Stomach (tissue), 19 donors: ENCODE measurements at regions of chr2 and their contacts with region 1.

Region 1: DNA sequence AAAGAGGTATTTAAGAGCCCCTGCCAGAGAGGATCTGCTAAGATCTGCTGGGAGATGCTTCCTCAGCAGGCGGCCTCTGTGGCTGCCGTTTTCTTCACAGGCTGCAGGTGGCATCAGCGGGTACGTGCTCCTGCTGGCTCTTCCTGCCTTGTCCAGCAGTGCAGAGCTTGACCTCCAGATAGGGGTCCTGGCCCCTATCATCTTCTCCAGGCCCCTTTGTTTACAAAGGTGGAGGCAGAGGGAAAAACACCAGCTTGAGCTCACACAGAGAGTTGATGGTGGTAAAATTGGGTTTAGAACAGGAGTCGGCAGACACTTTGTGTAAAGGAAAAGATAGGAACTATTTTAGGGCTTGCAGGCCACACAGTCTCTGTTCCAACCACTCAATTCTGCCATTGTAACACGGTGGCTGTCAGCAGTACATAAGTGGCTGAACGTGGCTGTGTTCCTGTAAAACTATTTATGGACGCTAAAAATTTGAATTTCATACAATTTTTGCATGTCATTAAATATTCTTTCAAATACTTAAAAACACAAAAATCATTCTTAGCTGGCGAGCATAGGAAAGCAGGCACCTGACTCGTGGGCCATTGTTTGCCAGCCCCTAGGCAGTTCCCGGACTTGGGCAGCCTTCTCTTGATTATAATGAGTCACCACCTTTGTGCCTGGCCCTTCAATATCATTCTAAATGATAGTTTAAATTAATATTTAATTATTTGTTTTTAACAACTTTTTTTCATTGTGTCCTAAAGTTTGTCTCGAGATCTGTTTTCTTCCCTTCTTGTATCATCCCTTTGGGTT is 98.2 kb upstream of the B3GNT7 start:
- DNase-seq: peak; percentile 69 to 81
- H3K4me3 ChIP-seq: no peak overlapping the region
- H3K27ac ChIP-seq: peak overlapping the region; percentile 3 to 75 (median 48)
- H3K4me1 ChIP-seq: peaks cover 11 to 45% (median 18%) of the 10 kb centered on the region in 4 donors
- H3K27me3 ChIP-seq: no peaks in the 10 kb centered on the region
- CTCF ChIP-seq: peak in 5 of 7 experiments; percentile 63 to 67 (median 66)
- EP300 ChIP-seq: no peak
- POLR2A ChIP-seq: no peak

Region 2: DNA sequence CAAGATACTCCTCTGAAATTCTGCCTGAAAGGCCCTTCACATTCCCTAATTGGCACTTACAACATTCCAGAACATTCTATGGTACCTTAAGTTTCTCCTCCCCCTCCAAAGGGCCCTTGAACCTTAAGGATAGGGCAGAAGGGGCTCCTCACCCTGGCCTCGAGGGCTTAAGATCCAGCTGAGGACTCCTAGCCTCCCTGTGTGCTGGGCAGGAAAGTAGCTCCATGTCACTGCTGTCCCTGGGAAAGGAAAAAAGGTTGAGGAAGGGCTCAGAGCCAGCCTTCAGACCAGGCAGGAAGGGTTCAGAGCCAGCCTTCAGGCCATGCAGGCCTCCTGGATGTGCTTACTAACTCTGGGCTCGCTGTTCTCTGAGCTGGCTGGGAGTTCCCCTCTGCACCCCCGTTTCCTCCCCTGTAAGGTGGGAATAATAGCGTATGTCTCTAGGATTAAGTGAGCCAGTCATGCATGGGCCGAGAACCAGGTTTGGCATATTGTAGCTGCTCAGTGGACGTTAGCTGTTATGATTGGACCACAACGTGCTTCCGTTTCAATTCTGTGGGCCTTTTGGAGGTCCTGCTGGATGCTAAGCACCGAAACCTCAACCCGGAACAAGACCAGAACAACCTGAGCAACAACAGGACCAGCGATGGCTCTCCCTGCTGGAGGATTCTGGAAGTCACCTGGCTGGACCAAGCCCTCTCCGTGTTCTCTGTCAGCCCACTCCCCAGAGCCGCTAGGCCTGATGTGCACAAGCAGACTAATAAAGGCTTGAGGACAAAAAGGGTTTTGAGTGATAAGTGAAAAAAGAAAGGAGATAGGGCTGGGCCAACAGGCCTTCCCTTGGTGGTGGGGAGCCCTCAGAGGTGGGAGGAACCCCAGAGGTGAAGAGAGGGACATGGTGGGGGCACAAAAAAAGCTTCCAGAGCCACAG is 97.2 kb after region 1 on chr2:
- intact Hi-C with region 1: loop called (anchors 5 kb)
- DNase-seq: peak in 1 of 2 donors; percentile 67
- H3K4me3 ChIP-seq: peak overlapping the region in 3 of 4 donors; percentile 59 to 73 (median 69)
- H3K27ac ChIP-seq: peak overlapping the region; percentile 50 to 90 (median 77)
- H3K4me1 ChIP-seq: peaks cover 17 to 43% (median 30%) of the 10 kb centered on the region in 4 donors
- H3K27me3 ChIP-seq: peaks cover 0 to 42% (median 19%) of the 10 kb centered on the region in 3 donors
- CTCF ChIP-seq: peak in 3 of 7 experiments; percentile 8 to 28 (median 27)
- EP300 ChIP-seq: no peak
- POLR2A ChIP-seq: no peak

Region 3: GRCh38 chr2:231411831-231412617 is 114.7 kb after region 1 on chr2:
- intact Hi-C with region 1: loop called (anchors 5 kb)
- DNase-seq: peak; percentile 87 to 94
- H3K4me3 ChIP-seq: peak overlapping the region; percentile 57 to 73 (median 60)
- H3K27ac ChIP-seq: peak overlapping the region; percentile 56 to 89 (median 67)
- H3K4me1 ChIP-seq: peaks cover 0 to 28% (median 16%) of the 10 kb centered on the region in 4 donors
- H3K27me3 ChIP-seq: peaks cover 0 to 9% (median 5%) of the 10 kb centered on the region in 3 donors
- CTCF ChIP-seq: peak in 5 of 7 experiments; percentile 71 to 88 (median 78)
- EP300 ChIP-seq: no peak
- POLR2A ChIP-seq: no peak

Region 4: DNA sequence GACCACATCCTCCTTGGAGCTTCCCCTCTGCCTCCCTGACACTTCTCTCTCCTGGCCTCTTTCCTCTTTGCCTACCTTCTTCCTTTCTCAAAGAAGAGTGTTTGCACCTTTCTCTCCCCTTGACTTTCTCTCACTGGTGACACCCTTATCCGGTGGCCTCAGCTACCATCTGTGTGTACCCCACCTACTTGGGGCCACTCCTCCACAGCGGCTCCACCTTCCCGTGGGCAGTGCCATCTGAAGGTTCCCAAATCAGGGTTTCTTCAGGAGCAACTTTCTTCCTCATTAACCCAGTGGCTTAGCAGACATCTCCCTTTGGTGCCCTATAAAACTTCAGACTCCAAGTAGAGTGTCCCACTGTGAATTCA is 172.3 kb after region 1 on chr2:
- intact Hi-C with region 1: no loop called
- DNase-seq: no peak
- H3K4me3 ChIP-seq: no peak overlapping the region
- H3K27ac ChIP-seq: no peak overlapping the region
- H3K4me1 ChIP-seq: peaks cover 6 to 10% (median 8%) of the 10 kb centered on the region in 4 donors
- H3K27me3 ChIP-seq: no peaks in the 10 kb centered on the region
- CTCF ChIP-seq: no peak
- EP300 ChIP-seq: no peak
- POLR2A ChIP-seq: no peak